ENCODE measurements at regions of chr17 and their contacts with region 1.

Region 1: DNA sequence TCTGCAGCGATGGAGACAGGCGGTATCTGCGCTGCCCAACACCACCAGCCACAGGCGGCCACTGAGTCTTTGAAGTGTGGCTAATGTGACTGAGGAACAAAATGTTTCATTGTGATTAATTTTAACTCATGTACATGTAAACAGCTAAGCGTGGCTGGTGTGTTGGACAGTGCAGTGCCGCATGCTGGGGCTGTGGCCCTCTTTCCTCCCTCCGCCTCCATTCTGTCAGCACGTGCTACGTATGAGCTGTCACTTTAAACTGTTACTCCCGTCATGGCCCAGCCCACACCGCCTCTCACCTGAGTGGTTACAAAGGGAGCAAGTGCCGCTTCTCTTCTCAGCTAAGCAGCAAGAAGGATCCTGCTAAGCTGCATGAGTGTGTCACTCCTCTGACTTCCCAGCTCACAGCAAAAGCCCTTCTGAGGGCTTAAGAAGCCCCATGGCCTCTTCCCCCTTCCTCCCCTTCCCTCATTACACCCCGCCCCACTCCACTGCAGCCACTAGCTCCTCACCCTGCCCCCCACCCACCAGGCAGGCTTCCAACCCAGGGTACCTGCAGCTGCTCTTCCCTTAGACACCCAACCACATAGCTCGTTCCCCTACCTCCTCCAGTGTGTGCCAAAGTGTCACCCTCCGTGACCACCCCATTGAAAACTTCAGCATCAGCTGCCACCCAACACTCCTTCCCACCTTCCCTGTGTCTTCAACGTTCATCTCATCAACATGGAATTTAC is 15.0 kb downstream of the HASPIN start:
- DNase-seq: no peak
- ATAC-seq: peak in 3 of 4 donors; percentile 47 to 64 (median 52)
- H3K4me3 ChIP-seq: peak overlapping the region in 2 of 12 donors; percentile 46 to 49
- H3K27ac ChIP-seq: peak overlapping the region in 2 of 12 donors; percentile 15 to 48
- H3K4me1 ChIP-seq: peaks cover 0 to 13% (median 6%) of the 10 kb centered on the region in 12 donors
- H3K27me3 ChIP-seq: peaks cover 0 to 8% (median 0%) of the 10 kb centered on the region in 9 donors
- CTCF ChIP-seq: no peak
- POLR2A ChIP-seq: no peak

Region 2: DNA sequence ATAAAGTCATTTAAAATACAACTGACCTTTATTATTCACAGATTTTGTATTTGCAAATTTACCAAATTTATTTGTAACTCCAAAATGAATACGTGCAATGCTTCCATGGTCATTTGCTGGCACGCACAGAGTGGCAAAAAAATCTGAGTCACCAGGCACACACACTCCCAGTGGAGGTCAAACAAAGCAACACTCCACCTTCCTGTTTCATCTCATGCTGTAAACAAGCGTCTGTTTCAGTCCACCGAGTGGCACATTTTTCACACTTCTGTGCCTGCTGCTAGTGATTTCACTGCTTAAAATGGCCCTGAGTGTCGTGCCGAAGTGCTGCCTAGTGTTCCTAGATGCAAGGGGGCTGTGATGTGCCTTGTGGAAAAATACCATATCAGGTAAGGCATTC is 80.1 kb after region 1 on chr17:
- intact Hi-C with region 1: loop called in 2 of 10 experiments (anchors 10 kb)
- DNase-seq: no peak
- ATAC-seq: peak; percentile 56 to 93 (median 81)
- H3K4me3 ChIP-seq: no peak overlapping the region
- H3K27ac ChIP-seq: peak overlapping the region in 4 of 12 donors; percentile 54 to 72 (median 60)
- H3K4me1 ChIP-seq: peaks cover 0 to 9% (median 0%) of the 10 kb centered on the region in 12 donors
- H3K27me3 ChIP-seq: no peaks in the 10 kb centered on the region
- CTCF ChIP-seq: no peak
- POLR2A ChIP-seq: no peak

Region 3: DNA sequence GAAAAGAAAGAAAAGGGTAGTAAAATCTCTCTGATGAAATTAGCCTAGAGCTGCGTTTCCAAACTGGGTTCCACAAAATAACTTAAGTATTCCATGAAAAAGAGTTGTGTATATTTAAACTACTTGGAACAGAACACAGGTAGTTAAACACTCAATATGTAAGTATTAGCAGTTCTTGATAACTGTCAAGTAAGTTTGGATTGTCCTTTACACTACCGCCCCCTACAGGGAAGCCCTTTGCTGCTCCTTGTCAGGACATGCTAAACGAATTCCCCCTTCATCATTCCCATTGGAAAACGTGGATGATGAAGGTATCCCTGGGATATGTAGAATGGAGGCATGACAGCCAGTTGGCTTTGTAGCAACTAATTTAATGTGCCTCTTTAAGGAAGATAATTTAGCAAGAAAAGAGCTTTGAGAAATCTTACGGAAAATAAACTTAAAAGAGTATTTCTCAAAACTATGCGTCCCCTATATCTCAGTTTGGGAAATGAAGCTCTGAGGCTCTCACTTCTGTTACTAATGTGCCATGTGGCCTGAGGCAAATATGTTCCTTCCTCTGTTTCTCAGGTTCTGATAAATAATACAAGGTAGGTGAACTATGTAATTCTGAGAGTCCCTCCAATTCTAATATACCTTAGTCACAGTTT is 88.5 kb after region 1 on chr17:
- intact Hi-C with region 1: loop called in 2 of 10 experiments (anchors 5 to 10 kb)
- DNase-seq: no peak
- ATAC-seq: no peak
- H3K4me3 ChIP-seq: no peak overlapping the region
- H3K27ac ChIP-seq: peak overlapping the region in 6 of 12 donors; percentile 68 to 87 (median 78)
- H3K4me1 ChIP-seq: peaks cover 0 to 22% (median 15%) of the 10 kb centered on the region in 12 donors
- H3K27me3 ChIP-seq: no peaks in the 10 kb centered on the region
- CTCF ChIP-seq: peak; percentile 17 to 70 (median 34)
- POLR2A ChIP-seq: no peak

Region 4: DNA sequence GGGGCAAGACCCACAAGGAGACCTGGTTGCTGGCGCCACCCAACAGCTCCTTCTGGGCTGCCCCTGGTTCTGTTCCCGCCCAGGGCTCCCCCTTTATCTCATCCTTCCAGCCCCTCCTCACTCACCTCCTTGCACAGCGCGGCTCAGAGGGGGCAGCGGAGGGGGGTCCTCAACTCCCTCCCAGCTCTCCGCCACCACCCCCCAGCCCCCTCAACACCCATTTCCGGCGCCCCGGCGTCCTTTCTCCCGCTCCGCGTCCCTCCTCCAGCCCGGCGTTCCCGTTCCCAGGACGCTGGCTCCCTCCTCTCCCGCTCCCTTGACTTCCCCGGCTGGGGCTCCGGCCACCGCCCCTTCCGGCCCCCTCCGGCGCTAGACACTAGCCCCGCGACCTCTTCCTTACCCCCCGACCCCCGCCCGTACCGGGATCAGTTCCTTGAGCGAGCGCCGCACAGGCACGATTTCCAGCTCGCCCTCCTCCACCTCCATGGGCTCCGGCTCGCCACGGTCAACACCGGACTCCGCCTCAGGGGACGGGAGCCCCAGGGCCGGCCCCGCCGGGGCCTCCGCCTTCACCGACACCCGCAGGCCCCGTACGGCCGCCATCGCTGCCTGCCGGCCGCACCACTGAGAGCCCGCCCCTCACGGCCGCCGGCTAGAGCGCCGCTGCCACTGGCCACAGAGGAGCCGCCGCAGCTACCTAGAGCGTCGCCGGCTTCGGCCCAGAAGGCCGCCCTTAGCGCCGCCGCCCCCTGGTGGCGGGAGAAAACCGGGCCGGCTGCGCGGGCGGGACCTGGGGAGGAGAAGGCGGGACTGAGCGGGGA is 107.1 kb after region 1 on chr17 and contains the start of gene NCBP3:
- intact Hi-C with region 1: loop called in 7 of 10 experiments (anchors 5 to 10 kb)
- DNase-seq: peak; percentile 90 to 95 (median 92)
- ATAC-seq: peak; percentile 90 to 99 (median 98)
- H3K4me3 ChIP-seq: peak within 1 kb of the TSS; percentile 69 to 100 (median 90)
- H3K27ac ChIP-seq: peak within 1 kb of the TSS; percentile 48 to 96 (median 92)
- H3K4me1 ChIP-seq: peaks cover 0 to 30% (median 15%) of the 10 kb centered on the region in 12 donors
- H3K27me3 ChIP-seq: peaks cover 0 to 2% (median 0%) of the 10 kb centered on the region in 9 donors
- CTCF ChIP-seq: peak; percentile 86 to 99 (median 96)
- POLR2A ChIP-seq: peak; percentile 23 to 93
- total RNA-seq, gene NCBP3: 10.6 to 26.4 (median 21.6) TPM

Region 5: GRCh38 chr17:3913531-3914311 is 175.0 kb after region 1 on chr17:
- intact Hi-C with region 1: loop called in 2 of 10 experiments (anchors 5 to 10 kb)
- DNase-seq: peak; percentile 77 to 88 (median 83)
- ATAC-seq: peak; percentile 56 to 79 (median 70)
- H3K4me3 ChIP-seq: peak overlapping the region in 2 of 12 donors; percentile 12 to 53
- H3K27ac ChIP-seq: peak overlapping the region in 3 of 12 donors; percentile 9 to 79 (median 41)
- H3K4me1 ChIP-seq: peaks cover 3 to 52% (median 31%) of the 10 kb centered on the region in 12 donors
- H3K27me3 ChIP-seq: no peaks in the 10 kb centered on the region
- CTCF ChIP-seq: peak; percentile 92 to 99 (median 96)
- POLR2A ChIP-seq: no peak